MCF 10A (cell line): ENCODE measurements at regions of chr12 and their contacts with region 1.

Region 1: GRCh38 chr12:120265473-120266179 is at the start of gene PXN:
- DNase-seq: peak; percentile 72
- H3K4me3 Mint-ChIP-seq: peak within 1 kb of the TSS; percentile 95
- H3K27ac Mint-ChIP-seq: peak within 1 kb of the TSS; percentile 94
- H3K4me1 Mint-ChIP-seq: peaks cover 28% of the 10 kb centered on the region
- H3K27me3 Mint-ChIP-seq: no peaks in the 10 kb centered on the region
- CTCF ChIP-seq: peak; percentile 84
- total RNA-seq, gene PXN: 216 and 256 TPM in 2 replicates

Region 2: DNA sequence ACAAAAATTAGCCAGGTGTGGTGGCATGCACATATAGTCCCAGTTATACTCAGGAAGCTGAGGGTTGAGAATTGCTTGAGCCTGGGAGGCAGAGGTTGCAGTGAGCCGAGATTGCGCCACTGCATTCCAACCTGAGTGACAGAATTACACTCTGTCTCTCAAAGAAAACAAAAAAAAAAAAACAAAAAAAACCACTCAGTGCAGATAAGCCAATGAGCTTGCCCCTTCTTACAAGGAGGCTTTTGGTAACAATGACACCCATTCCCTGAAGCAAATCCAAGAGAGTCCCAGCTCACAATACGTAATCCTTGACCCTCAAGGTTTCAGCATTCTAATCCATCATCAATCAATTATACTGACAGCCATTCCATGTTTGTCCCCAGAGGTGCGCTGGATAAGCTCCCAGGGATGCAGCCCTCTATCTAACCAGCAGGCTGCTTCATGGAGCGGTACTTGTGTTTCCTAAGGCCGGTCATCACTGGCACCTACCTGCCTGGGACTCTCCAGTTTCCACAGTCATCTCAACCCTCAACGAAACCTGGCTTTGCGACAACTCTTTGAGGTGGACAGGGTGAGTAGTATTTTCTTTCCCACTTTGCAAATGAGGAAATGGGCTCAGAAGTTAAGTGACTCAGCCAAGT is 83.5 kb before region 1 on chr12:
- CTCF ChIA-PET with region 1: interaction called, 3 read pairs
- POLR2A ChIA-PET with region 1: interaction called, 3 read pairs
- intact Hi-C with region 1: loop called (anchors 1 kb)
- DNase-seq: peak; percentile 86
- H3K4me3 Mint-ChIP-seq: peak overlapping the region; percentile 30
- H3K27ac Mint-ChIP-seq: peak overlapping the region; percentile 57
- H3K4me1 Mint-ChIP-seq: peaks cover 12% of the 10 kb centered on the region
- H3K27me3 Mint-ChIP-seq: no peaks in the 10 kb centered on the region
- CTCF ChIP-seq: no peak

Region 3: GRCh38 chr12:120216742-120217605 is 48.7 kb before region 1 on chr12:
- CTCF ChIA-PET with region 1: interaction called, 454 read pairs
- POLR2A ChIA-PET with region 1: interaction called, 549 read pairs
- intact Hi-C with region 1: no loop called
- DNase-seq: no peak
- H3K4me3 Mint-ChIP-seq: no peak overlapping the region
- H3K27ac Mint-ChIP-seq: no peak overlapping the region
- H3K4me1 Mint-ChIP-seq: no peaks in the 10 kb centered on the region
- H3K27me3 Mint-ChIP-seq: no peaks in the 10 kb centered on the region
- CTCF ChIP-seq: no peak

Region 4: DNA sequence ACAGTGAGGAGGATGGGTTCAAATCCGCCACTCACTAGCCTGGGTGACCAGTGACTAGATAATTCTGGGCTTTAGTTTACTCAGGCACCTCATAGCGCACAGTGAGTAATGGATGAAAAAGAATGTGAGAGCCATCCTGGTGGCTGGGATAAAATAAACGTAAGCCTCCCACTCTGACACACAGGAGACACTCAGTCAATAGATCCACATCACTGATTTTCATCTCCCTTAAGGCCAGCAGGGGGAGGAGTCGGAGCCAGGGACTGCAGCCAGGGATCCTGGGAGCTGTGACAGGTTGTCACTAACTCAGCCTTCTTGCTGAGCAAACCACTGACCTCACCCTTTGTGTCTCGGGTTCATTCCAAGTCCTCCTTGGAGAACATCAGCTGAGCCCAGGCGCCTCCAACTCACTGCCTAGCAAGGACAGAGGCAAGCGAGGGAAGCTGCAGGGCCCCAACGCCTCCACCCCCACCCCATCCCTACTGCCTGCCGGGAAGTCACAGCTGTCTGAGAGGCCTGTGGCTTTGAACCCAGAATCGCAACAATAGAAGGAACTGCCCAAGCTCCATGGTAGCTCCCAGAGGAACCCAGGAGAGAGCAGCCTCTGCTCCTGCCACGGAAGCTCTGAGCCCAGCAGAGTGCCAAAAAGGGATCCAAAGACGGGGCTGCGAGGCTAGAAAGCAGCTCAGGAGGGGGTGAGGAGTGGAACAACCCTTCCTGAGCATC is 30.8 kb before region 1 on chr12:
- CTCF ChIA-PET with region 1: interaction called, 454 read pairs
- POLR2A ChIA-PET with region 1: interaction called, 549 read pairs
- intact Hi-C with region 1: loop called (anchors 1 kb)
- DNase-seq: peak; percentile 92
- H3K4me3 Mint-ChIP-seq: peak overlapping the region; percentile 27
- H3K27ac Mint-ChIP-seq: peak overlapping the region; percentile 79
- H3K4me1 Mint-ChIP-seq: peaks cover 74% of the 10 kb centered on the region
- H3K27me3 Mint-ChIP-seq: no peaks in the 10 kb centered on the region
- CTCF ChIP-seq: peak; percentile 35

Region 5: GRCh38 chr12:120249875-120250795 is 15.5 kb before region 1 on chr12:
- CTCF ChIA-PET with region 1: interaction called, 49 read pairs
- POLR2A ChIA-PET with region 1: interaction called, 220 read pairs
- intact Hi-C with region 1: loop called (anchors 1 kb)
- DNase-seq: no peak
- H3K4me3 Mint-ChIP-seq: no peak overlapping the region
- H3K27ac Mint-ChIP-seq: peak overlapping the region; percentile 81
- H3K4me1 Mint-ChIP-seq: peaks cover 62% of the 10 kb centered on the region
- H3K27me3 Mint-ChIP-seq: no peaks in the 10 kb centered on the region
- CTCF ChIP-seq: no peak

Region 6: GRCh38 chr12:120352117-120352516 is 86.5 kb after region 1 on chr12:
- CTCF ChIA-PET with region 1: no interaction called
- POLR2A ChIA-PET with region 1: no interaction called
- intact Hi-C with region 1: no loop called
- DNase-seq: peak; percentile 33
- H3K4me3 Mint-ChIP-seq: no peak overlapping the region
- H3K27ac Mint-ChIP-seq: no peak overlapping the region
- H3K4me1 Mint-ChIP-seq: no peaks in the 10 kb centered on the region
- H3K27me3 Mint-ChIP-seq: peaks cover 11% of the 10 kb centered on the region
- CTCF ChIP-seq: no peak

Region 7: GRCh38 chr12:121061831-121062230 is 796.2 kb after region 1 on chr12:
- CTCF ChIA-PET with region 1: no interaction called
- POLR2A ChIA-PET with region 1: no interaction called
- intact Hi-C with region 1: no loop called
- DNase-seq: peak; percentile 25
- H3K4me3 Mint-ChIP-seq: no peak overlapping the region
- H3K27ac Mint-ChIP-seq: no peak overlapping the region
- H3K4me1 Mint-ChIP-seq: no peaks in the 10 kb centered on the region
- H3K27me3 Mint-ChIP-seq: no peaks in the 10 kb centered on the region
- CTCF ChIP-seq: peak; percentile 48